Activated CD4-positive, alpha-beta memory T cell treated with anti-CD3 and anti-CD28 coated beads for 36 hours (primary cell): ENCODE measurements at regions of chr6 and their contacts with region 1.

Region 1: DNA sequence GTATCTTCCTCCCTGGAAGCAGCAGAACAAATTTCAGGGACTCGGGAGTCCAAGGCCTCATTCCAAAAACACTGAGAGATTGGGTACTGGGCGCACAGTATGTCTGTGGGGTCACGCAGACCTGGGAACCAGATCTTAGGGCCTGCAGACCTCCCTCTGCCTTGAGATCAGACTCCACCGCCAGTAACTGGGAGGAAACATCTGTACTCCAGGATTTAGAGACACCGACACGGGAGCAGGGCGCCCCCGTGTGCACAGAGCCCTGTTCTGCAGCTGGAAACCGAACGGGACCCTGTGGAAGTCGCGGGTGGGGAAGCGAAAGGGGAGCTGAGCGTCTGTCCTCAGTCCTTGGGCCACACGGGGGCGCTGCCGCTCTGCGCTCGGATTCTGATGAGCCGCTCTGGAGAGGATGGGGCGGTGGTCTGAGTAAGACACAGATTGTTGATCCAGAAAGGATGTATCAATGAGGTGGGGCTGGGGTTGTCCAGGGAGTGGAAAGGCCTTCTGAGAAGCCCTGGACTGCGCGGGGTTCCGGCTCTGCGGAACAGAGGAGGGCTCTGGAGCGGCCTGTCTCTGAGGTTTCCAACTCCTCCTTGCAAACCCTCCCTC is 35.7 kb upstream of the HLA-E start:
- DNase-seq: peak; percentile 88
- H3K4me3 Mint-ChIP-seq: peak overlapping the region; percentile 33
- H3K27ac Mint-ChIP-seq: no peak overlapping the region
- H3K4me1 Mint-ChIP-seq: peaks cover 32% of the 10 kb centered on the region
- H3K27me3 Mint-ChIP-seq: peaks cover 82% of the 10 kb centered on the region

Region 2: GRCh38 chr6:30357678-30358540 is 95.7 kb before region 1 on chr6:
- CTCF ChIA-PET with region 1: interaction called, 10 read pairs
- POLR2A ChIA-PET with region 1: no interaction called
- intact Hi-C with region 1: loop called (anchors 5 kb)
- DNase-seq: peak; percentile 63
- H3K4me3 Mint-ChIP-seq: peak overlapping the region; percentile 63
- H3K27ac Mint-ChIP-seq: no peak overlapping the region
- H3K4me1 Mint-ChIP-seq: peaks cover 4% of the 10 kb centered on the region
- H3K27me3 Mint-ChIP-seq: peaks cover 46% of the 10 kb centered on the region

Region 3: DNA sequence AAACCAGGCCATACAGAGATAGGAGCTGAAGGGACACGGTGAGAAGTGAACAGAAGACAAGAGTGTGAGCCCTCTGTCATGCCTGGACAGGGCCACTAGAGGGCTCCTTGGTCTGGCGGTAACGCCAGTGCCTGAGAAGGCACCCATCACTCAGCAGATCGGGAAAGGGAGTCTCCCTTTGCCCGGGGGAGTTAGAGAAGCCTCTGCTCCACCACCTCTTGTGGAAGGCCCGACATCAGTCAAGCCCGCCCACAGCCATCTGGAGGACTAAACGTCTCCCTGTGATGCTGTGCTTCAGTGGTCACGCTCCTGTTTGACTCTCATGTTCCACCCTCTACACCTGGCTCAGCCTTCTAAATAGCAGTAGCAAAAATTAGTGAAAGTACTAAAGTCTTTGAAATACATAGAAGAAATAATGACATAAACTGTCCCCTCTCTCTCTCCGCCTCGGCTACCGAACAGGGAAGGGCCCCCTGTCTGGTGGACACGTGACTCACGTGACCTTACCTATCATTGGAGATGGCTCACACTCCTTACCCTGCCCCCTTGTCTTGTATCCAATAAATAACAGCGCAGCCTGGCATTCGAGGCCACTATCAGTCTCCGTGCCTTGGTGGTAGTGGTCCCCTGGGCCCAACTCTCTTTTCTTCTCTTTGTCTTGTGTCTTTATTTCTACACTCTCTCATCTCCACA is 42.0 kb before region 1 on chr6:
- CTCF ChIA-PET with region 1: interaction called, 18 read pairs
- POLR2A ChIA-PET with region 1: no interaction called
- intact Hi-C with region 1: loop called (anchors 1 kb)
- DNase-seq: peak; percentile 72
- H3K4me3 Mint-ChIP-seq: peak overlapping the region; percentile 25
- H3K27ac Mint-ChIP-seq: no peak overlapping the region
- H3K4me1 Mint-ChIP-seq: peaks cover 7% of the 10 kb centered on the region
- H3K27me3 Mint-ChIP-seq: peaks cover 53% of the 10 kb centered on the region

Region 4: GRCh38 chr6:30441171-30441570 is 12.4 kb before region 1 on chr6:
- CTCF ChIA-PET with region 1: interaction called, 13 read pairs
- POLR2A ChIA-PET with region 1: no interaction called
- intact Hi-C with region 1: no loop called
- DNase-seq: no peak
- H3K4me3 Mint-ChIP-seq: no peak overlapping the region
- H3K27ac Mint-ChIP-seq: no peak overlapping the region
- H3K4me1 Mint-ChIP-seq: peaks cover 7% of the 10 kb centered on the region
- H3K27me3 Mint-ChIP-seq: peaks cover 55% of the 10 kb centered on the region

Region 5: DNA sequence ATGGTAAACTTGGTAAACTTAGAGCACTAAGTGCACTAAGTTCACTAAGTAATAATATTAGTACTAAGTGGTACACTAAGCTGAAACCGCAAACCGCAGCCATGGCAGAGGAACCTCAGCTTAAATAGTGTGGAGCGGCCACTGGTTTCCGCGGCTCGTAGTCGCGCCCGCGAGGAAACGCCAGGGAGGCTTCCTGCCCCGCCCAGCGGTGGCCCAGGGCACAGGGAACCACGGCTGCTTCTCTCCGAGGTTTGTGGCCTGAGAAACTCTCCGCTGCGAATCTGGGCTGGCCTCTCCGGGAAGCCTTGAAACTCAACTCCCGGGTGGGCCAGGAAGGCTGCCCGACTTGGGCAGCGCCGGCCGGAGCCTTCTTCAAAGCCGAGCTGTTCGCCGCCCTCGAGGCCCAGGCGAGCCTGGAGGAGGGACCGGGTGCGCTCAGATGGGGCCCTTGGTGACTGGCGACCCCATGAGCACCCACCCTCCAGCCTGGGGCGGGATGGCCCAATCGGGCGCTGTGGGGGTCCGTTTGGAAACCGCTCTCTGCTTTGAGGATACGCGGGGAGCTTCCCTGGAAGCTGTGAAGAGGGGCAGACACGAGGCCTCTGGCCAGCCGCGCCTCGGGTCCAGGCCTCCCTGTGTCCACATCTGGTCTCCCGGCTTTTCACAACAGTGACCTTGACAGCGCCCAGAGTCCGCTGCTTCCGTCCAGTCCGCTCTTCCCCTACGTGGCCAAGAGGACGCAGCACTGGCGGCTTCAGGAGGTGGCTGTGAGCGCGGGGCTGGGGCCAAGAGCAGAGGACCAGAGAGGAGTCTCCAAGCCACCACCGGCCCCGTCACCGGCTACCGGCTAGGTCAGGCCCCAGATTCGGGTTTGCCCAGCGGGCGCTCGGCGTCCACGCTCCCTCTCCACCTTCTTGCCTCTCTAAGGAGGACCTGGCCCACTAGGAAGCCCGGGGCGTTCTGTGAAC is 10.3 kb after region 1 on chr6:
- CTCF ChIA-PET with region 1: interaction called, 133 read pairs
- POLR2A ChIA-PET with region 1: interaction called, 8 read pairs
- intact Hi-C with region 1: loop called (anchors 2 kb)
- DNase-seq: peak; percentile 75
- H3K4me3 Mint-ChIP-seq: no peak overlapping the region
- H3K27ac Mint-ChIP-seq: no peak overlapping the region
- H3K4me1 Mint-ChIP-seq: peaks cover 44% of the 10 kb centered on the region
- H3K27me3 Mint-ChIP-seq: peaks cover 88% of the 10 kb centered on the region

Region 6: DNA sequence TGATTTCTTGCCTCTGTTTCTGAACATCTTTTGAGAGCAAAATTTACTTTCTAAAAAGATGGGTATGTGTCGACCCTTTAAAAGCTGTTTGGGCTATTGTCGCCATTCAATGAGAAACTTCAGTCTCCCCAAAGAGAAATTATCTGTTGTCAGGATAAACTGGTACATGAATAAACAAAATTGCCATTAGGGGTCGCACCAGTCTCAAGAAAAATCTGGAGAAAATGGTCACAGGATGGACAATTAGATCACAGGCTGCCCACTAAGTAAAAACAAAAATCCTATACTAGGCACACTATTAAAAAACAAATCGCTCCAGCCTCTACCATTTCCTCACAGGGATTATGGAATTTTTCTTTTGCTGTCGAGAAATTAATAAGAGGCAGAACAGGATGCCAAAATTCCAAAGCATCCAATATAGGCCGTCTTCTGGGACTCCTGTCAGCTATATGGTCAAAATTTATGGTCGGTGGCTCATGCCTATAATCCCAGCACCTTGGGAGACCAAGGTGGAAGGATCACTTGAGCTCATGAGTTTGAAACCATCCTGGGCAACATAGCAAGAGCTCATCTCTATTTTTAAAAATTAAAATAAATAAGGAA is 30.2 kb after region 1 on chr6:
- CTCF ChIA-PET with region 1: interaction called, 19 read pairs
- POLR2A ChIA-PET with region 1: interaction called, 4 read pairs
- intact Hi-C with region 1: loop called (anchors 2 kb)
- DNase-seq: no peak
- H3K4me3 Mint-ChIP-seq: no peak overlapping the region
- H3K27ac Mint-ChIP-seq: no peak overlapping the region
- H3K4me1 Mint-ChIP-seq: peaks cover 34% of the 10 kb centered on the region
- H3K27me3 Mint-ChIP-seq: peaks cover 29% of the 10 kb centered on the region

Region 7: GRCh38 chr6:30600451-30600961 is 146.9 kb after region 1 on chr6:
- CTCF ChIA-PET with region 1: interaction called, 11 read pairs
- POLR2A ChIA-PET with region 1: interaction called, 3 read pairs
- intact Hi-C with region 1: loop called (anchors 1 kb)
- DNase-seq: no peak
- H3K4me3 Mint-ChIP-seq: no peak overlapping the region
- H3K27ac Mint-ChIP-seq: no peak overlapping the region
- H3K4me1 Mint-ChIP-seq: peaks cover 14% of the 10 kb centered on the region
- H3K27me3 Mint-ChIP-seq: no peaks in the 10 kb centered on the region

Region 8: GRCh38 chr6:30625457-30625856 is 171.8 kb after region 1 on chr6:
- CTCF ChIA-PET with region 1: no interaction called
- POLR2A ChIA-PET with region 1: no interaction called
- intact Hi-C with region 1: no loop called
- DNase-seq: no peak
- H3K4me3 Mint-ChIP-seq: no peak overlapping the region
- H3K27ac Mint-ChIP-seq: peak overlapping the region; percentile 7
- H3K4me1 Mint-ChIP-seq: peaks cover 29% of the 10 kb centered on the region
- H3K27me3 Mint-ChIP-seq: no peaks in the 10 kb centered on the region

Region 9: DNA sequence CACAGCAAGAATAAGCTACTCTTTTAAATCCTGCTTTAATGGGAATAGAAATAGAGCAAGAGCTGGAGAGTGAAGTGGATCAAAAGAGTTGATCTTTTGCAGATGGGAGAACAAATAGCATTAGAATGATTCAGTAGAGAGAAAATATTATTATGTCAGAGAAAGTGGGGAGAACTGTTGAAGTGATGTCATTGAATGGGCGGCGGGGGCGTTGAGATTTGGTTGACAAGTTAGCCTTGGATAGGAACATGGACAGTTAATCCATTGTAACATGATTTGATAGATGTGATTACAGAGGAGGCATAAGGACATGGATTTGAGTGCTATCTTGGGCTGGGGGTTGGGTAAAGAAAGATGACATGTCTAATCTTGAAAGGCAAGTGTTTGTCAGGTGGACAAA is 182.2 kb after region 1 on chr6:
- CTCF ChIA-PET with region 1: no interaction called
- POLR2A ChIA-PET with region 1: no interaction called
- intact Hi-C with region 1: no loop called
- DNase-seq: no peak
- H3K4me3 Mint-ChIP-seq: no peak overlapping the region
- H3K27ac Mint-ChIP-seq: no peak overlapping the region
- H3K4me1 Mint-ChIP-seq: no peaks in the 10 kb centered on the region
- H3K27me3 Mint-ChIP-seq: no peaks in the 10 kb centered on the region